GM12878 (cell line): ENCODE measurements at regions of chr6 and their contacts with region 1.

Region 1: DNA sequence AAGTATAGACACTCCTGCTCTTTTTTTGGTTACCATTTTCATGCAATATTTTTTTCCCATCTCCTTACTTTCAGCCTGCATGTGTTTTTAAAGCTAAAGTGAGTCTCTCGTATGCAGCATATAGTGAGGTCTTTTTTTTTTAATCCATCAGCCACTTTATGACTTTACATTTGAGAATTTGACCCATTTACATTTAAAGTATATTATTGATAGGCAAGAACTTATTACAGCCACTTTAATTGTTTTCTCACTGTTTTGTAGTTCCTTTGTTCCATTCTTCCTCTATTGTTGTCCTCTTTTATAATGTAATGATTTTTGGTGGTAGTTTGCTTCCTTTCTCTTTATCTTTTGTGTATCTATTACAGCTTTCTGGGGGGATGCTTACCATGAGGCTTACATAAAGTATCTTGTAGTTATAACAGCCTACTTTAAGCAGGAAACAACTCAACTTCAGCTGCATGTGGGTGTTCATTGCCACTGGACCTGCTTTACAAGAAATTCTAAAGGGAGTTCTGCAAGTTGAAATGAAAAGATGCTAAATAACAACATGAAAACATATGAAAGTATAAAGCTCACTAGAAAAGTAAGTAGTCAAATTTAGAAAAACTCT is 71.8 kb downstream of the TNFAIP3 start:
- DNase-seq: no peak
- ATAC-seq: no peak
- H3K4me3 ChIP-seq: no peak overlapping the region
- H3K27ac ChIP-seq: peak overlapping the region; percentile 82
- H3K4me1 ChIP-seq: peaks cover 35% of the 10 kb centered on the region
- H3K27me3 ChIP-seq: no peaks in the 10 kb centered on the region
- CTCF ChIP-seq: no peak
- EP300 ChIP-seq: no peak
- POLR2A ChIP-seq: no peak
- RAD21 ChIP-seq: no peak

Region 2: GRCh38 chr6:137791281-137792159 is 147.4 kb before region 1 on chr6:
- CTCF ChIA-PET with region 1: interaction called, 9 read pairs
- POLR2A ChIA-PET with region 1: no interaction called
- RAD21 ChIA-PET with region 1: interaction called, 8 read pairs
- SMC1A ChIA-PET with region 1: interaction called, 16 read pairs
- in situ Hi-C with region 1: loop called (anchors 5 kb)
- intact Hi-C with region 1: no loop called
- DNase-seq: no peak
- ATAC-seq: peak; percentile 29
- H3K4me3 ChIP-seq: peak overlapping the region; percentile 25
- H3K27ac ChIP-seq: peak overlapping the region; percentile 89
- H3K4me1 ChIP-seq: peaks cover 18% of the 10 kb centered on the region
- H3K27me3 ChIP-seq: no peaks in the 10 kb centered on the region
- CTCF ChIP-seq: no peak
- EP300 ChIP-seq: no peak
- POLR2A ChIP-seq: no peak
- RAD21 ChIP-seq: no peak

Region 3: GRCh38 chr6:137811121-137811915 is 127.6 kb before region 1 on chr6:
- CTCF ChIA-PET with region 1: interaction called, 3 read pairs
- POLR2A ChIA-PET with region 1: interaction called, 3 read pairs
- RAD21 ChIA-PET with region 1: interaction called, 3 read pairs
- SMC1A ChIA-PET with region 1: interaction called, 11 read pairs
- in situ Hi-C with region 1: no loop called
- intact Hi-C with region 1: no loop called
- DNase-seq: peak; percentile 95
- ATAC-seq: peak; percentile 95
- H3K4me3 ChIP-seq: peak overlapping the region; percentile 20
- H3K27ac ChIP-seq: peak overlapping the region; percentile 89
- H3K4me1 ChIP-seq: peaks cover 31% of the 10 kb centered on the region
- H3K27me3 ChIP-seq: no peaks in the 10 kb centered on the region
- CTCF ChIP-seq: no peak
- EP300 ChIP-seq: peak in 1 of 2 experiments; percentile 72; a peak in 2 of 4 replicates
- POLR2A ChIP-seq: peak; percentile 88
- RAD21 ChIP-seq: no peak

Region 4: DNA sequence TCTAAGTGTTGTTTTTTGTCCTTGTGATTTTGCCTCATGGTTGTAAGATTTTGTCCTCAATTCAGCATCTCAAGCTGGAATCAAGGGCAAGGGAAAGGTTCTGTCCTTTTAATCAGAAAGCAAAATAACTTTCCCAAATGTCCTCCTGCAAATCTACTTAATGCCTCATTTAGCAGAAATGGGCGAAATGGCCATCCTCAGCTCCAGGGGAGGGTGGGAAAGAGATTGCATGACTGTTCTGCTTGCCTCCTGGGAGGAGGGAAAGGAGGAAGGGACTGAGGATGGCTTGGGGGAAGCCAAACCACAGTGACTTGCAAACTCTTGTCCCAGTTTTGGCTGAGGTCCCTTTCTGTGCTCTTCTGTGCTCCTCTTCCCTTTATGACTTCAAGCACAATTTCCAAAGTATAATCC is 28.4 kb before region 1 on chr6:
- CTCF ChIA-PET with region 1: interaction called, 71 read pairs
- POLR2A ChIA-PET with region 1: interaction called, 28 read pairs
- RAD21 ChIA-PET with region 1: interaction called, 45 read pairs
- SMC1A ChIA-PET with region 1: interaction called, 102 read pairs
- in situ Hi-C with region 1: no loop called
- intact Hi-C with region 1: loop called (anchors 1 kb)
- DNase-seq: no peak
- ATAC-seq: no peak
- H3K4me3 ChIP-seq: no peak overlapping the region
- H3K27ac ChIP-seq: peak overlapping the region; percentile 95
- H3K4me1 ChIP-seq: peaks cover 48% of the 10 kb centered on the region
- H3K27me3 ChIP-seq: no peaks in the 10 kb centered on the region
- CTCF ChIP-seq: no peak
- EP300 ChIP-seq: no peak
- POLR2A ChIP-seq: no peak
- RAD21 ChIP-seq: no peak

Region 5: DNA sequence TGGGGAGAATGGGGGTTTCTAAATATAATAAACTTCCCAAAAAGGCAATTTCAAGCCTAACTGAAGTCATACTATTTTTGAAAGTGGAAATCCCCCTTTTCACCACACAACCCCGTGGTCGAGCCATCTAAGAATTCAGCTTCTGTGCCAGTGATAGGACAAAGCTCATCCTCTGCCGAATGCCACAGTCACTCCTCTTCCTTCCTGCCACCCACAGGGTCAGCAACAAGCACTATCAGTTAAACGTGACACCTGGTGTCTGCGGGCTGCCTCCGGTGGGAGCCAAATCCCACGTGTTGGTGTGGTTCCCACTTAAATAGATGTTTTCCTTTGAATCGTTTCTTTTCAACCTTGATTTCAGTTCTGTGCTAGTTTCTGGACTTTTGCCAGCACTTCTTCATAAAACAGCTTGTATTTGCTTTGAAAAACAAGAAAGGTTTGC is 11.1 kb before region 1 on chr6:
- CTCF ChIA-PET with region 1: interaction called, 102 read pairs
- POLR2A ChIA-PET with region 1: interaction called, 26 read pairs
- RAD21 ChIA-PET with region 1: interaction called, 57 read pairs
- SMC1A ChIA-PET with region 1: interaction called, 111 read pairs
- in situ Hi-C with region 1: no loop called
- intact Hi-C with region 1: loop called (anchors 1 kb)
- DNase-seq: peak; percentile 99
- ATAC-seq: peak; percentile 93
- H3K4me3 ChIP-seq: peak overlapping the region; percentile 19; the same call in 1 of the 2 replicates
- H3K27ac ChIP-seq: peak overlapping the region; percentile 98
- H3K4me1 ChIP-seq: peaks cover 61% of the 10 kb centered on the region
- H3K27me3 ChIP-seq: no peaks in the 10 kb centered on the region
- CTCF ChIP-seq: no peak
- EP300 ChIP-seq: peak; percentile 91; a peak in 3 of 4 replicates
- POLR2A ChIP-seq: peak; percentile 69; the same call in 1 of the 2 replicates
- RAD21 ChIP-seq: 0 out of 2 replicates have a peak, but pooled peaks have one; percentile 4

Region 6: DNA sequence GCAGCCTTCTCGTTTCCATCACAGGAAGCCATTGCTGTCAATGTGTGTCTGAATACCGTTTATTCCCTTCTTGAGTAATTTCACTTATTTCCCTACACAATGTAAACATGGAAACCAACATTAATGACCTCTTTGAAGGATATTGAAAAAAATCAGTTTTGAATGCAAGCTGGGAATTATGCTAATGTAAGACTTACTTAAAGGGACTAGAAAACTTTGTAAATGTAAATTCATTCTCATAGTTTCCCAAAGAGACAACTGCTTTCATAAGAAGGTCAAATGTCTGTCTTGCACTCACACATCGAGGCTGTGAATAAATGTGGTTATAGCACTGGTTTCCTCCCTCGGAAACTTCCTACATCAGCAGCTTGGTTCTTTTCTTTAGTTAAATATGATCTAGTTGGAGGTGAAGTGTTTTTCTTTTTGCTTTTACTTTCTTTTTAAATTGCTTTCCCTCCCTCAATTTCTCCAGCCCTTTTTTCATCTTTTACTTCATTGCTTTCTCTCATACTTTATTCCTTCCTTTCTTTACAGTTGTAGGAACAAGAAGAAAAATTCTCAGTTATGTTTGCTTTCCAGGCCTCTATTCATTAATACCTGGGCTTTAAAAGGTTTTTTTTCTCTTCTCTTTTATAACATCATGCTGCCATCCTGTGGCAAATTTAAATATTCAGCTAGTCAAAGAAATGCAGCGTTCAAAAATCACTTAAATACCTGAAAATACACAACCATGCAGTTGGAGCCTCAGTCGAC is 36.5 kb after region 1 on chr6:
- CTCF ChIA-PET with region 1: interaction called, 161 read pairs
- POLR2A ChIA-PET with region 1: interaction called, 8 read pairs
- RAD21 ChIA-PET with region 1: interaction called, 22 read pairs
- SMC1A ChIA-PET with region 1: interaction called, 33 read pairs
- in situ Hi-C with region 1: no loop called
- intact Hi-C with region 1: loop called (anchors 2 kb)
- DNase-seq: peak; percentile 53
- ATAC-seq: peak; percentile 67
- H3K4me3 ChIP-seq: peak overlapping the region; percentile 1; the same call in 1 of the 2 replicates
- H3K27ac ChIP-seq: peak overlapping the region; percentile 34
- H3K4me1 ChIP-seq: peaks cover 36% of the 10 kb centered on the region
- H3K27me3 ChIP-seq: no peaks in the 10 kb centered on the region
- CTCF ChIP-seq: peak; percentile 23 to 62 (median 44); a peak in 5 of 6 replicates
- EP300 ChIP-seq: no peak
- POLR2A ChIP-seq: no peak
- RAD21 ChIP-seq: peak; percentile 81

Region 7: GRCh38 chr6:138078491-138078890 is 139.6 kb after region 1 on chr6:
- CTCF ChIA-PET with region 1: no interaction called
- POLR2A ChIA-PET with region 1: no interaction called
- RAD21 ChIA-PET with region 1: no interaction called
- SMC1A ChIA-PET with region 1: no interaction called
- in situ Hi-C with region 1: no loop called
- intact Hi-C with region 1: no loop called
- DNase-seq: no peak
- ATAC-seq: no peak
- H3K4me3 ChIP-seq: no peak overlapping the region
- H3K27ac ChIP-seq: no peak overlapping the region
- H3K4me1 ChIP-seq: no peaks in the 10 kb centered on the region
- H3K27me3 ChIP-seq: no peaks in the 10 kb centered on the region
- CTCF ChIP-seq: no peak
- EP300 ChIP-seq: no peak
- POLR2A ChIP-seq: no peak
- RAD21 ChIP-seq: no peak

Region 8: DNA sequence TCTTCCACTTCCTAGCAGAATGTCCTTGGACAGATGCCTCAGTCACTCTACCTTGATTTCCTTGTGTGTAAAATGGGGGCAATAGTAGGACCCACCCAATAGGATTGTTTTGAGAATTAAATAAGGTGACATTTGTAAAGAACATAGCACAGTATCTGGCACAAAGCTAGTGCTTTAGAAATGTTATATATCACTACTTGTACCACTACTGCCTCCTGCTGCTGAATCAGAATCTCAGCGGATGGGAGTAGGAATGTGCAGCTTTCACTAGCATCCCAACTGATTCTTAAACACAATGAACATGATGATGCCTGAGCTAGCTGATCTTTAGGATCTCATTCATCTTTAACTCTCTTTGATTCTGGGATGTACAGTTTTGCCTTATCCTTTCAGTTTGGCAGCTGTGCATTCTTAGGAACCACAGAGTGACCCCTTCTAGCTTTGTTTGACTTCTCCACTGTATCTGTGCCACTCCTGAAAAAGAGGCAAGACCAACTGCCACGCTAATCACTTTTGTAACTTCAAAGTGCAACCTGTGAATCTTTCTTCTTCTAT is 272.2 kb after region 1 on chr6:
- CTCF ChIA-PET with region 1: no interaction called
- POLR2A ChIA-PET with region 1: no interaction called
- RAD21 ChIA-PET with region 1: no interaction called
- SMC1A ChIA-PET with region 1: no interaction called
- in situ Hi-C with region 1: no loop called
- intact Hi-C with region 1: no loop called
- DNase-seq: no peak
- ATAC-seq: no peak
- H3K4me3 ChIP-seq: no peak overlapping the region
- H3K27ac ChIP-seq: no peak overlapping the region
- H3K4me1 ChIP-seq: no peaks in the 10 kb centered on the region
- H3K27me3 ChIP-seq: peaks cover 0 to 5% of the 10 kb centered on the region in 2 experiments; a peak in 2 of 4 replicates
- CTCF ChIP-seq: no peak
- EP300 ChIP-seq: no peak
- POLR2A ChIP-seq: no peak
- RAD21 ChIP-seq: no peak

Region 9: GRCh38 chr6:138600726-138601125 is 661.9 kb after region 1 on chr6:
- CTCF ChIA-PET with region 1: no interaction called
- POLR2A ChIA-PET with region 1: no interaction called
- RAD21 ChIA-PET with region 1: no interaction called
- SMC1A ChIA-PET with region 1: no interaction called
- in situ Hi-C with region 1: no loop called
- intact Hi-C with region 1: no loop called
- DNase-seq: no peak
- ATAC-seq: no peak
- H3K4me3 ChIP-seq: no peak overlapping the region
- H3K27ac ChIP-seq: no peak overlapping the region
- H3K4me1 ChIP-seq: no peaks in the 10 kb centered on the region
- H3K27me3 ChIP-seq: no peaks in the 10 kb centered on the region
- CTCF ChIP-seq: no peak
- EP300 ChIP-seq: no peak
- POLR2A ChIP-seq: no peak
- RAD21 ChIP-seq: no peak

Region 10: GRCh38 chr6:139605350-139605749 is 1666.5 kb after region 1 on chr6:
- CTCF ChIA-PET with region 1: no interaction called
- POLR2A ChIA-PET with region 1: no interaction called
- RAD21 ChIA-PET with region 1: no interaction called
- SMC1A ChIA-PET with region 1: no interaction called
- in situ Hi-C with region 1: no loop called
- intact Hi-C with region 1: no loop called
- DNase-seq: no peak
- ATAC-seq: no peak
- H3K4me3 ChIP-seq: no peak overlapping the region
- H3K27ac ChIP-seq: no peak overlapping the region
- H3K4me1 ChIP-seq: peaks cover 8% of the 10 kb centered on the region
- H3K27me3 ChIP-seq: no peaks in the 10 kb centered on the region
- CTCF ChIP-seq: no peak
- EP300 ChIP-seq: no peak
- POLR2A ChIP-seq: no peak
- RAD21 ChIP-seq: no peak